Activated naive CD4-positive, alpha-beta T cell treated with anti-CD3 and anti-CD28 coated beads for 36 hours (primary cell): ENCODE measurements at regions of chr4 and their contacts with region 1.

Region 1: GRCh38 chr4:2424581-2424980 is 5.8 kb downstream of the CFAP99 start:
- DNase-seq: no peak
- H3K4me3 Mint-ChIP-seq: no peak overlapping the region
- H3K27ac Mint-ChIP-seq: no peak overlapping the region
- H3K4me1 Mint-ChIP-seq: peaks cover 6% of the 10 kb centered on the region
- H3K27me3 Mint-ChIP-seq: peaks cover 18% of the 10 kb centered on the region

Region 2: DNA sequence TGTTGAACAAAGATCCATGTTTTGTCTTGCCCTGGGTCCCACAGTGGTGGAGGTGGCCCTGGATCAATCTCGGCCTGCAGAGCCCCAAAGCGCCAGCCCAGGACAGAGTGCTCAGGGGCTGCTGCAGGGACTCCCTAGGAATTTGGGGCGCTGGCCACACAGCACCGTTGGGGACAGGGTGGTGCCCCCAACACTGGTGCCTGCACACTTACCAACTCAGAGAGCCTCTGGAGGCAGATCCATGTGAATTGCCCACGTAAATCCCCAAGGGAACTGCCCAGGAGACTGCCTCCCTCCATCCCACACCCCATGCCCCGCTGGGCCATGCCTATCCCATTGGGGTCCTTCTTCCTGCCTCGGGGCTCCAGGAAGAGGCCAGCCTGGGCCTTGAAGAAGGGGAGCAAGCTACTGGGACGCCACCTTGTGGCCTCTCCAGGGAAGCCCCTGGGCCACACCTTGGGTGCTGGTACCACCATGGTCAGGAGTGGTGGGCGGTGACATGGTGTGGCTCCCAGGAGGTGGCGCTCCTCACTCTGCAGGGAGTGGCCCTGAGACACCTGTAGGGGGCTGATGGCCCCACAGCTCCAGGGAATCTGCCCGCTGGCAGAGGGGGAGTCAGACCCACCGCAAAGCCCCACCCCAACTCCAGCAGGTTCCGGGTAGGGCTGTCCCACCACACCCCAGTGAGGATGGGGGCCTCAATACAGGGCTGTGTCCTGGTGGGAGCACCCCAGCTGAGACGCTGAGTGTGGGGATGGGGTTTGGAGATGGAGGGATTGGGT is 17.0 kb after region 1 on chr4:
- CTCF ChIA-PET with region 1: interaction called, 15 read pairs
- intact Hi-C with region 1: no loop called
- DNase-seq: peak; percentile 86
- H3K4me3 Mint-ChIP-seq: no peak overlapping the region
- H3K27ac Mint-ChIP-seq: no peak overlapping the region
- H3K4me1 Mint-ChIP-seq: peaks cover 2% of the 10 kb centered on the region
- H3K27me3 Mint-ChIP-seq: no peaks in the 10 kb centered on the region

Region 3: GRCh38 chr4:3936184-3936583 is 1511.6 kb after region 1 on chr4:
- CTCF ChIA-PET with region 1: no interaction called
- intact Hi-C with region 1: no loop called
- DNase-seq: no peak
- H3K4me3 Mint-ChIP-seq: no peak overlapping the region
- H3K27ac Mint-ChIP-seq: no peak overlapping the region
- H3K4me1 Mint-ChIP-seq: no peaks in the 10 kb centered on the region
- H3K27me3 Mint-ChIP-seq: no peaks in the 10 kb centered on the region